MCF 10A (cell line): ENCODE measurements at regions of chr4 and their contacts with region 1.

Region 1: DNA sequence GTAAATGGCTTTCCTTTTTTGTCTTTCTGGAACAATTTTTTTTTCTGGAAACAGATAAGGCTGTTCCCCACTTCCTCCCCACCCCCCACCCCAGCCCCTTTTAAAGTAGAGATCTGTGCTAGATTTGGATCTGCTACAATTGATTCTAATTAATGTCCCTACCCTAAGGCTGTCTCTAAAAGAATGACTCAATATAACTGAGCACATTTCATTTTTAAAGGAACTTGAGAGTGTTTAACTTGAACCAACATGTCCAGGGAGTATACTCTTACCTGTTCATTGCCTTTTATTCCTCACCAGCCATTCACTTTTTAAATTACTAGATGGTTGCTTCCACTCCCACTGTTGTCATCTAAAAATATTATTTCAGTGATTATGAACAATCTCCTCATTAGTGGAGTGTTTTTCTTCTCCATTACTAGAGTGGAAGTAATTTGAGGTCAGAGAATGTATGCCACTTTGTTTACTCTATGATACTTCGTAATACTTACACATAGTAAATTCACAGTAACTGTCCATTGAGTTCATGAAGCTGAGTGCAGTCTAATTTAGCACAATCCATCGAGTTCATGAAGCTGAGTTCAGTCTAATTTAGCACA is 14.1 kb upstream of the CNOT6L start:
- DNase-seq: peak; percentile 17
- H3K4me3 Mint-ChIP-seq: no peak overlapping the region
- H3K27ac Mint-ChIP-seq: peak overlapping the region; percentile 89
- H3K4me1 Mint-ChIP-seq: peaks cover 8% of the 10 kb centered on the region
- H3K27me3 Mint-ChIP-seq: no peaks in the 10 kb centered on the region
- CTCF ChIP-seq: no peak

Region 2: GRCh38 chr4:77734928-77735327 is 98.3 kb before region 1 on chr4:
- CTCF ChIA-PET with region 1: no interaction called
- POLR2A ChIA-PET with region 1: no interaction called
- intact Hi-C with region 1: no loop called
- DNase-seq: peak; percentile 38
- H3K4me3 Mint-ChIP-seq: no peak overlapping the region
- H3K27ac Mint-ChIP-seq: no peak overlapping the region
- H3K4me1 Mint-ChIP-seq: peaks cover 5% of the 10 kb centered on the region
- H3K27me3 Mint-ChIP-seq: no peaks in the 10 kb centered on the region
- CTCF ChIP-seq: no peak

Region 3: GRCh38 chr4:77843628-77844027 is 10.4 kb after region 1 on chr4:
- CTCF ChIA-PET with region 1: interaction called, 3 read pairs
- POLR2A ChIA-PET with region 1: interaction called, 10 read pairs
- intact Hi-C with region 1: no loop called
- DNase-seq: no peak
- H3K4me3 Mint-ChIP-seq: no peak overlapping the region
- H3K27ac Mint-ChIP-seq: no peak overlapping the region
- H3K4me1 Mint-ChIP-seq: no peaks in the 10 kb centered on the region
- H3K27me3 Mint-ChIP-seq: no peaks in the 10 kb centered on the region
- CTCF ChIP-seq: no peak